Panc1 (cell line): ENCODE measurements at regions of chr3 and their contacts with region 1.

Region 1: DNA sequence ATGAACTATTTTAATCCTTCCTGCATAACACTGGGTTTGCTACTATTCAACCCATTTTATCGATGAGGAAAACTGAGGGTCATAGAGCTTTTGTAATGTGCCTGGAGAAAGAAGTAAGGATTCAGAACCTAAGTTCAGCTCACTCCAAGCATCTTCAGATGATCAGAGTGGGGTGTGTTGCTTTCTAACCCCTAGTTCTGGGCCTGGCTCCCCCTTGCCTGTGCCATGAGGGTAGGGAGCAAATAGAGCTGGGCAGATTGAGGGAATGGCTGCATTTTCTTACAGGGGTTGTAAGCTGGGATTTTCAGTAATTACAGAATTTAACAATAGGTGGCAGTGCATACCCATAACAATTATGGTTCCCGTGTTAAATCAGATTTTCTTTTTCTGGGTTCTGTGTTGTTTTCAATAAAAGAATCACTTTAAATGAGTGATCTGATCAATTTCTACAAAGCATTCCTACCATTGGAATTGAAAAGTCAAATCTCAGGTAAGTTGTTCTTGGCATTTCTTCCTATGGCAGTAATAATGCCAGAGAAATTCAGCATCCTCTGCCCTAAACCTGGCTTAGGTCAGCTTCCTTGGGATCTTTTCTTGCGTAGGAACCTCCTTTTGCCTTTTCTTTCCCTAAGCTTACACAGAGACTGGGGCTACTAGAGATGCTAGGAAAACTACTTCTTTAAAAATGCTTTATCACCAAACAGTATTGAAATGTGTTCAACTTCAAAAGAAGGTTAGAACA is 103.8 kb upstream of the IL12A start:
- DNase-seq: peak; percentile 54
- ATAC-seq: peak; percentile 81
- H3K4me3 ChIP-seq: no peak overlapping the region
- H3K27ac ChIP-seq: no peak overlapping the region
- H3K4me1 ChIP-seq: no peaks in the 10 kb centered on the region
- H3K27me3 ChIP-seq: no peaks in the 10 kb centered on the region
- CTCF ChIP-seq: peak; percentile 79

Region 2: DNA sequence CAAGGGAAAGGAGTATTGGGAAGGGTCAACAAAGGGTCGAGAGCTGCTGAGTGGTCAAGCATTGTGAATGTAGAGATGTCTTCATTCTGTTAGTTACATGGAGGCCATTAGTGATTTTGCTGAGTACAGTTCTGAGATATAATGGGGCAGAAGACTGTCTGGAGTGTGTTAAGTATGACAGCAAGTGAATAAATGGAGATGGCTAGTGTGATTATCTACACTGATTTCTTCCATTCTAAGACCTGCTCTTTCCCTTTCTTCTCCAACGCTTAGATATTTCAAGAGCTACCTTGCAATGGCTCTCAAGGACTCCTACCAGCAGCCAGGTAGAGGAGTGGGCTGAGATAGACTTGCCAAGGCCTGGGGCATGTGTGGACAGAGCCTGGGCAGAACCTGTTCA is 866.5 kb before region 1 on chr3:
- CTCF ChIA-PET with region 1: no interaction called
- POLR2A ChIA-PET with region 1: no interaction called
- in situ Hi-C with region 1: no loop called
- intact Hi-C with region 1: no loop called
- DNase-seq: no peak
- ATAC-seq: no peak
- H3K4me3 ChIP-seq: no peak overlapping the region
- H3K27ac ChIP-seq: no peak overlapping the region
- H3K4me1 ChIP-seq: no peaks in the 10 kb centered on the region
- H3K27me3 ChIP-seq: no peaks in the 10 kb centered on the region
- CTCF ChIP-seq: no peak

Region 3: GRCh38 chr3:159828542-159828943 is 56.3 kb before region 1 on chr3:
- CTCF ChIA-PET with region 1: no interaction called
- POLR2A ChIA-PET with region 1: no interaction called
- in situ Hi-C with region 1: no loop called
- intact Hi-C with region 1: loop called (anchors 5 kb)
- DNase-seq: no peak
- ATAC-seq: peak; percentile 88
- H3K4me3 ChIP-seq: no peak overlapping the region
- H3K27ac ChIP-seq: peak overlapping the region; percentile 52; the same call in 1 of the 2 replicates
- H3K4me1 ChIP-seq: peaks cover 26% of the 10 kb centered on the region
- H3K27me3 ChIP-seq: no peaks in the 10 kb centered on the region
- CTCF ChIP-seq: peak; percentile 71

Region 4: GRCh38 chr3:160084998-160085397 is 200.2 kb after region 1 on chr3:
- CTCF ChIA-PET with region 1: no interaction called
- POLR2A ChIA-PET with region 1: no interaction called
- in situ Hi-C with region 1: no loop called
- intact Hi-C with region 1: no loop called
- DNase-seq: no peak
- ATAC-seq: no peak
- H3K4me3 ChIP-seq: no peak overlapping the region
- H3K27ac ChIP-seq: no peak overlapping the region
- H3K4me1 ChIP-seq: no peaks in the 10 kb centered on the region
- H3K27me3 ChIP-seq: no peaks in the 10 kb centered on the region
- CTCF ChIP-seq: no peak